ENCODE measurements at regions of chr2 and their contacts with region 1.

Region 1: DNA sequence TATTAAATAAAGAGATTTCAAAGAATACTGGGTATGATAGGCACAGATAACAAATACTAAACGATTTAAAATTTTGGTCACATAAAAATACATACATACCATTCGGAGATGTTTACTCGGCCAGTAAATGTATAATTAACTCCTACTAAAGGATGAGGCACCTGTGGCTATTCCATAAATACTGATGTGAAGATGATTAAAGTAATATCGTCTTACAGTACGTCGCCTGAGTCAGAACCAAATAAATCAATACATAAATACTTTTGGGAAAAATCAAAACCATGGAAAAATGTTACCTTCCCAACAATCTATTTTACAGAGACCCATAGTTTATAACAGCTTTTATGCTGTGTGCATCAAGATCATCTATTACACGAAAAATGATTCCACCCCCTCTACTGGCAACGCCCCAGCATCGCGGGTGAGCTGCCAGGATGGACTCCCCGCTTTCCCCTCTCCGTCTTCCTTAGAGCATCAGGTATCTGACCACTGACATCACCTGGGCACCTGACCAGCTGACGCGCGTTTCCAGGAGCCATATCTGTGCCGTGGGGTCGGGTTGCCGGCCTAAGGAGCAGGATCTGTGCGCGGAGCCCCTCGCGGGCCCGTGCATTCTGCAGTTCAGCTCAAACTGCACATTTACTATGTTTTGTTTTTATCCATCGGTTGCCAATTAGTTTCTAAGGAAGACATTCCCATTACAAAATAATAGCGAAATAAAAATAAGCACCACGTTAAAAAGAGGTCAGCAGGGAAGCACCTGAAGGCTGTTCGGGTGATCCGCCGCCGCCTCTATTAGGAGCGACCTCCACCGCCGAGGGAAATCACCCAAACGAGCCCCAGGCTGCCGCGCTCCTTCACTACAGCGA is 901 bp downstream of the ICA1L start:
- DNase-seq: peak; percentile 57
- ATAC-seq: peak; percentile 86 to 92

Region 2: DNA sequence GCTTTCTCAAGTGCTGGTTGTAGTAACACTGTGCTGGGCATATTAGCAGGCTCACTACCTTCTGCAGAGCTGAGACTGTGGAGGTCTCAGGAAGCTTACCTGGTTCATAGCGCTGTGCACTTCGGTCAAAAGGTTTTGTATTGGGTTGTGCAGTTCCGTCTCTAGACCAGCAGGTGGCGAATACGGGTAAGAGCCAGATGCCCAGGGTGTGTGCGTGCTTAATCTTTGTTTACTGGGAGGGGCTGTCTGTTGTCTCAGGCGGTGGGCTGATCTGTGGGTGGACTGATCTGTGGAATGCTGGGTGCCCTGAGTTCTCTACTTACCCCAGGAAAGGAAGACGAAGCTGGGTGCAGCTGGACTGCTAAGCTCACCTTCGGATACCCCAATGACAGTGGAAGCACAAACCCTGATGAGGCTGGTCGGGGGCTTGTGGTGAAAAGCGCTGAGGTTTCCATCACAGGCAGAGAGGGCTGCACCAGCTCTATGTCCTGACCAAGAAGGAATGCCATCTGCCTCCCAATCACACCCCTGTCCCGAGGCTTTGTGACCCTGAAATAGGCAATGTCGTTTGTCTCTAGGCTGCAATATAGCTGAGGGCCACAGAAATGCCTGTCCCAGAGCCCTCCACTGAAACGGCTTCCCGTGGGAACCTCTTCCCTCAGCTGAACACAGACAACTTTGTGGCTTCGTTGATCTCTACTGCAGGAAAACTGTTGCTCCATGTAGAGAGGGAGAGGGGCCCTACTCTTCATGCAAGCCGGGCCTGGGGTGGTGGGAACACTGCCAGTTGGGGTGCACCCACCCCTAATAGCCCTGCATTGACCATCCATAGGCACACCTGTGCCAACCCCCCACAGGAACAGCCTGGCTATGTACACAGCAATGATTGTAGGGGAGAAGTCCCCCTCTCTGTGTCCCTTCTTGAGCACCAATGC is 281.8 kb before region 1 on chr2:
- intact Hi-C with region 1: loop called in 1 of 2 experiments (anchors 2 kb)
- DNase-seq: peak; percentile 70
- ATAC-seq: peak; percentile 79 to 89

Region 3: GRCh38 chr2:203112342-203112741 is 241.7 kb after region 1 on chr2:
- intact Hi-C with region 1: no loop called
- DNase-seq: no peak
- ATAC-seq: no peak

Measured in left cardiac atrium (tissue), 4 donors.